ENCODE measurements at regions of chr16 and their contacts with region 1.

Region 1: GRCh38 chr16:88678224-88678979 is 7.9 kb downstream of the SNAI3 start:
- DNase-seq: no peak
- ATAC-seq: no peak
- H3K4me3 Mint-ChIP-seq: no peak overlapping the region
- H3K27ac Mint-ChIP-seq: no peak overlapping the region
- H3K4me1 Mint-ChIP-seq: peaks cover 21% of the 10 kb centered on the region
- H3K27me3 Mint-ChIP-seq: no peaks in the 10 kb centered on the region

Region 2: DNA sequence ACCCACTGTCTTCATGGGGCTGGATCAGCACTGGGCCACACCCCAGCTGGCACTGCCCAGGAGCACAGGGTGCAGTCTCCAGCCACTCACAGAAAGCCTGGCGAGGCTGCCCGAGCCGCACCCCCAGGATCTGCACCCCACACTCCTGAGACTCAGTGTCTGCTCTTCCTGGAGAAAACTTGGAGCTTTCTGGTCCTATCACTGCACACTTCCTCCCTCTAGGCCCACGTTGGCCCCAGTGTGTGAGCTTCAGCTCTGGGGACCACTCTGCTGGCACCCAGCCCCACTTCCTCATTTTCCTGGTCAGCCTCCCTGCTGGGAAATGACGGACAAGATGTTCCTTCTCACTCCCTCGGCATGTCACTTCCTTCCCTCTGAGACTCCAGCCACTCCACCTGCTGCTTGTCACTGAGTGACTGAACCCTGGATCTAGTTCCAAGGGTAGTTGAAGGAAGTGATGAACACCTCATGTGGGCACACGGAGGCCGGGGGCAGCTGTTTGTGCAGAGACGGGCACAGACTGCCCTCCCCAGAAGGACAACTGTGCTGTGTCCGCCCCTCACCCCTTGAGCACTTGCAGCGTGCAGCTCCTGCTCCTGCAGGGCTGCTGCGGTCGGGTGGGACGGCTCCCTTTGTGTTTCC is 79.2 kb before region 1 on chr16:
- CTCF ChIA-PET with region 1: no interaction called
- POLR2A ChIA-PET with region 1: interaction called, 12 read pairs
- intact Hi-C with region 1: no loop called
- DNase-seq: no peak
- ATAC-seq: no peak
- H3K4me3 Mint-ChIP-seq: no peak overlapping the region
- H3K27ac Mint-ChIP-seq: no peak overlapping the region
- H3K4me1 Mint-ChIP-seq: peaks cover 10% of the 10 kb centered on the region
- H3K27me3 Mint-ChIP-seq: no peaks in the 10 kb centered on the region